ENCODE measurements at regions of chr4 and their contacts with region 1.

Region 1: GRCh38 chr4:56301181-56302076 is 85.9 kb downstream of the AASDH start:
- DNase-seq: peak; percentile 56
- H3K4me3 ChIP-seq: no peak overlapping the region
- H3K27ac ChIP-seq: no peak overlapping the region
- H3K4me1 ChIP-seq: no peaks in the 10 kb centered on the region
- H3K27me3 ChIP-seq: no peaks in the 10 kb centered on the region
- CTCF ChIP-seq: peak; percentile 63 to 80 (median 69)
- POLR2A ChIP-seq: no peak

Region 2: DNA sequence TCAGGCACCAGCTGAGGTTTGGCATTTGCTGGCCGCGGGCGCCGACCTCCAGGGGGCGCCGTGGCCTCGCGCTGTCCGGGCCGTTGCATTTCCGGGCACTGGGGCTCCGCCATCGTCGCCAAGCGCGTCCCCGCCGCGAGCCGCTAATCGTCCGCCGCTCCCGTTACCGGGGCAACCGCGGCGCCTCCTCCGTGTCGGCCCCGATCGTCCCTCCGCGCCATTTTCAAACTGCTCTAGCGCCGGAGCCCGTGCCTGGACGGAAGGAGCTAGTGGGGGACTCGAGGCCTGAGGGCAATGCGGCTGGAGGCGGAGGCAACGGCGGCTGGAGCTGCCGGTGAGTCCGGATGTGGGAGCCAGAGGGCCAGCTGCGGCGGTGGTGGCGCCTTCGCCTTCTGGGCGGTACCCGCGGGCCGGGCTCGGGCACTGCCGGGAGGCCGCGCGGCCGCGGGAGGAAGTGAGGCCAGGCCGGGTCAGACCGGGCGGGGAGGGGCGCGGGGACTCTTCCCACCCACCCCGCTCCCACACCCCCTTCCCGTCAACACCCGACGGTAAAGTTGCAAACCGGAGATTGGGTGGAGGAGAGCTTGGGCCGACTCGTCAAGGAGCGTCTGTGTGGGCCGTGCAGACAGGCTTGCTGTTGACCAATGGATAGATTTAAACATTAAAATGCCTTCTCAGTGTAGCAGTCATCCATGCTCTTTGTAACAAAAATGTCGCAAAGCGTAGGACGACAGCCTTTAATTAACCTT is 352.5 kb before region 1 on chr4 and contains the start of gene CEP135:
- intact Hi-C with region 1: loop called (anchors 1 kb)
- DNase-seq: peak; percentile 91
- H3K4me3 ChIP-seq: peak within 1 kb of the TSS; percentile 67 to 80
- H3K27ac ChIP-seq: peak within 1 kb of the TSS; percentile 78 to 85
- H3K4me1 ChIP-seq: no peaks in the 10 kb centered on the region
- H3K27me3 ChIP-seq: no peaks in the 10 kb centered on the region
- CTCF ChIP-seq: peak; percentile 82 to 97 (median 94)
- POLR2A ChIP-seq: peak; percentile 53
- total RNA-seq, gene CEP135: 3.3 to 7.1 TPM

Region 3: GRCh38 chr4:56112377-56112776 is 189.1 kb before region 1 on chr4:
- intact Hi-C with region 1: no loop called
- DNase-seq: no peak
- H3K4me3 ChIP-seq: no peak overlapping the region
- H3K27ac ChIP-seq: no peak overlapping the region
- H3K4me1 ChIP-seq: no peaks in the 10 kb centered on the region
- H3K27me3 ChIP-seq: no peaks in the 10 kb centered on the region
- CTCF ChIP-seq: no peak
- POLR2A ChIP-seq: no peak

Region 4: DNA sequence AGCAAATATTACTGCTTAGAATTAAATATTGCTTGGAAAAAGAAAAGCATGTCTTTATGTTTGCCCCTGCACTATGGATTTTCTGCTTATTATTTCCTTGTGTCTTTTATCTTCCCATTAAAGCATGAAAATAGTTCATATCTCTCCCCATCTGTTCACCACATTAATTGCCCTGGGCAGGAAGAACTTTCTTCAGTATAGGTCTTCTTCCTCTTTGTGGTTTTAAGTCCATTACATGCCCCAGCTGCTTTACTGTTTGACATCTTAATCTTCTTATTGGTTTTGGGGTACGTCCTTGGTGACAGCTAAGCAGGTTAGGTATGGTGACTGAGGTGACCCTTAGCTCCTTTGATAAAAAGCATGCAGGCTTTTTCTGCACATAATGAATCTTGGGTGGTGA is 71.5 kb before region 1 on chr4:
- intact Hi-C with region 1: no loop called
- DNase-seq: no peak
- H3K4me3 ChIP-seq: no peak overlapping the region
- H3K27ac ChIP-seq: no peak overlapping the region
- H3K4me1 ChIP-seq: no peaks in the 10 kb centered on the region
- H3K27me3 ChIP-seq: no peaks in the 10 kb centered on the region
- CTCF ChIP-seq: no peak
- POLR2A ChIP-seq: no peak

Region 5: GRCh38 chr4:56728512-56728911 is 427.1 kb after region 1 on chr4:
- intact Hi-C with region 1: no loop called
- DNase-seq: peak; percentile 93
- H3K4me3 ChIP-seq: no peak overlapping the region
- H3K27ac ChIP-seq: peak overlapping the region; percentile 11 to 29
- H3K4me1 ChIP-seq: no peaks in the 10 kb centered on the region
- H3K27me3 ChIP-seq: peaks cover 7% of the 10 kb centered on the region
- CTCF ChIP-seq: no peak
- POLR2A ChIP-seq: no peak